CD8-positive, alpha-beta T cell (primary cell): ENCODE measurements at regions of chr10 and their contacts with region 1.

Region 1: GRCh38 chr10:101120884-101121653 is 10.0 kb upstream of the TLX1 start:
- DNase-seq: peak in 8 of 9 experiments; percentile 19 to 67 (median 46)
- ATAC-seq: peak; percentile 78
- H3K4me3 ChIP-seq: peak overlapping the region; percentile 54 to 63
- H3K4me3 Mint-ChIP-seq: peak overlapping the region; percentile 98
- H3K27ac ChIP-seq: no peak overlapping the region
- H3K27ac Mint-ChIP-seq: peak overlapping the region; percentile 37
- H3K4me1 ChIP-seq: peaks cover 27% of the 10 kb centered on the region
- H3K4me1 Mint-ChIP-seq: peaks cover 28% of the 10 kb centered on the region
- H3K27me3 ChIP-seq: peaks cover 16 to 36% of the 10 kb centered on the region in 2 experiments
- H3K27me3 Mint-ChIP-seq: peaks cover 48% of the 10 kb centered on the region
- CTCF ChIP-seq: no peak

Region 2: GRCh38 chr10:100986952-100987750 is 133.9 kb before region 1 on chr10 and contains the starts of genes MRPL43 and TWNK:
- CTCF ChIA-PET with region 1: no interaction called
- POLR2A ChIA-PET with region 1: no interaction called
- intact Hi-C with region 1: no loop called
- DNase-seq: peak; percentile 68 to 90 (median 87)
- ATAC-seq: peak; percentile 95
- H3K4me3 ChIP-seq: peak within 1 kb of the TSS; percentile 79 to 93
- H3K4me3 Mint-ChIP-seq: peak within 1 kb of the TSS; percentile 99
- H3K27ac ChIP-seq: peak within 1 kb of the TSS; percentile 51 to 64
- H3K27ac Mint-ChIP-seq: peak within 1 kb of the TSS; percentile 95
- H3K4me1 ChIP-seq: peaks cover 35% of the 10 kb centered on the region
- H3K4me1 Mint-ChIP-seq: peaks cover 46% of the 10 kb centered on the region
- H3K27me3 ChIP-seq: no peaks in the 10 kb centered on the region
- H3K27me3 Mint-ChIP-seq: no peaks in the 10 kb centered on the region
- CTCF ChIP-seq: no peak
- total RNA-seq, gene MRPL43: 28.3 to 28.4 TPM
- total RNA-seq, gene TWNK: 4.6 to 4.7 TPM

Region 3: GRCh38 chr10:101095542-101096213 is 25.4 kb before region 1 on chr10:
- CTCF ChIA-PET with region 1: interaction called, 17 read pairs
- POLR2A ChIA-PET with region 1: no interaction called
- intact Hi-C with region 1: no loop called
- DNase-seq: peak; percentile 43 to 80 (median 71)
- ATAC-seq: peak; percentile 97
- H3K4me3 ChIP-seq: no peak overlapping the region
- H3K4me3 Mint-ChIP-seq: no peak overlapping the region
- H3K27ac ChIP-seq: no peak overlapping the region
- H3K27ac Mint-ChIP-seq: no peak overlapping the region
- H3K4me1 ChIP-seq: peaks cover 5% of the 10 kb centered on the region
- H3K4me1 Mint-ChIP-seq: peaks cover 2% of the 10 kb centered on the region
- H3K27me3 ChIP-seq: peaks cover 3 to 11% of the 10 kb centered on the region in 2 experiments
- H3K27me3 Mint-ChIP-seq: peaks cover 51% of the 10 kb centered on the region
- CTCF ChIP-seq: peak; percentile 79

Region 4: DNA sequence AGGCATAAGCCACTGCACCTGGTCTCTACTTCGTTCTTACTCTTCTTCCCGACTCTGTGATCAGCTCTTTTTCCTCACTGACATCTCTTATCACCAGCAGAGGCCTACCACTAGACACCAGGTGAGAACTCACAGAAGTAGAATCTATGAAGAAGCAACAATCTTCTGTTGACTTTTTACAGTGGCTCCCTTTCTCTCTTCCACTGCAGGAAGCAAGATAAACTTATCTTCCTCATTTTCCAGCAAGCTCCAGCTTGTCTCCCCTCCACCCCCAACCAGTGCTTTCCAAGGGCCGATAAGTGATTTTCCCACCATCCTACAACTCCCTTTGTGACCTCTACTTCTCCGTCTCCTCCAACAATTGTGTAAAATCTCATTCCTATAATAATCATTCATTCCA is 55.5 kb after region 1 on chr10:
- CTCF ChIA-PET with region 1: no interaction called
- POLR2A ChIA-PET with region 1: no interaction called
- intact Hi-C with region 1: no loop called
- DNase-seq: no peak
- ATAC-seq: no peak
- H3K4me3 ChIP-seq: no peak overlapping the region
- H3K4me3 Mint-ChIP-seq: no peak overlapping the region
- H3K27ac ChIP-seq: no peak overlapping the region
- H3K27ac Mint-ChIP-seq: no peak overlapping the region
- H3K4me1 ChIP-seq: no peaks in the 10 kb centered on the region
- H3K4me1 Mint-ChIP-seq: no peaks in the 10 kb centered on the region
- H3K27me3 ChIP-seq: peaks cover 3 to 4% of the 10 kb centered on the region in 2 experiments
- H3K27me3 Mint-ChIP-seq: peaks cover 67% of the 10 kb centered on the region
- CTCF ChIP-seq: no peak